BJ (cell line): ENCODE measurements at regions of chr2 and their contacts with region 1.

Region 1: GRCh38 chr2:205947621-205948495 is 138.1 kb downstream of the INO80D start:
- DNase-seq: peak; percentile 16
- H3K4me3 ChIP-seq: no peak overlapping the region
- H3K27me3 ChIP-seq: 0 out of 2 replicates have a peak, but pooled peaks cover 1% of the 10 kb centered on the region
- CTCF ChIP-seq: peak; percentile 97

Region 2: DNA sequence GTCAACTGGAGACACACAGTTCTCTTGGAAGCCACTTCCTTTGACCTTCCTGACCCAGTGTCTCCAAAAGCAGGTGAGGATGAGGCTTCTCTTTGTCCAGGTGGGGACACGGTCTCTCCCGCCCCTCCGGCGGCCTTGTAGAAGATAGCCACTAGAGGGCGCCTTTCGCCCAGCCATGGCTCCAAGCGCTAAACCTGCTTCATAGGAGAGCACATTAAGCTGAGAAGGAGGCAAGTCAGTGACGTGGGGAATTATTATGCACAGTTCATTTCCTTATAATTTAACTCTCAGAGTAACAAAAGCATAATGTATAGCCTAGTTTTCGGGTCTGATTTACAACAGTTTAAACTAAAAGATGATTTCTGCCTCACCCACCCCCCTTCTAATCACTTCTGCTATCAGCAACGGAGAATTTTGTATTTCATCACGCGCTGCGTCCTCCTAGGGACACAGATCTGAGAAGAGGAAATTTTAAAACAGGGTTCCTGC is 1802.6 kb before region 1 on chr2:
- CTCF ChIA-PET with region 1: interaction called, 12 read pairs
- POLR2A ChIA-PET with region 1: no interaction called
- DNase-seq: no peak
- H3K4me3 ChIP-seq: peak overlapping the region; percentile 28
- H3K27me3 ChIP-seq: no peaks in the 10 kb centered on the region
- CTCF ChIP-seq: peak; percentile 95

Region 3: DNA sequence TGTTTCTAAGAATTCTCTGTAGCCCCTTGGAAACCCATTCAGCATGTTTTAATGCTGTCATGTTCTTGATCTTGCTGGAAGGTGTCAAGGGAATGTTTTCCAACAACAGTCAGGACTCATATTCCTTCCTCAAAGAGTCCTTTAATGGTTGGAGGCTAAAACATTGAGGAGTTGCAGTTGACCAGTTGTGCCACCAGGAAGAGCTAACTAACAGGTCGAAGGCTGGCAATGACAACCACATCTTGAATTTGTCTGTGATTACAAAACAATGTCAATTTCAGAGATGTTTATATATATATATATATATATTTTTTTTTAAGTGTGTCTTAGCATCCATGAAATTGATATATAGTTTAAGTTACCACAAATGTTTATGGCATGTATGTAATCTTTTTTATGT is 13.4 kb before region 1 on chr2:
- CTCF ChIA-PET with region 1: interaction called, 21 read pairs
- POLR2A ChIA-PET with region 1: no interaction called
- DNase-seq: no peak
- H3K4me3 ChIP-seq: no peak overlapping the region
- H3K27me3 ChIP-seq: no peaks in the 10 kb centered on the region
- CTCF ChIP-seq: peak; percentile 7; the same call in 1 of the 2 replicates

Region 4: GRCh38 chr2:205964111-205964761 is 16.4 kb after region 1 on chr2:
- CTCF ChIA-PET with region 1: interaction called, 10 read pairs
- POLR2A ChIA-PET with region 1: no interaction called
- DNase-seq: no peak
- H3K4me3 ChIP-seq: no peak overlapping the region
- H3K27me3 ChIP-seq: 0 out of 2 replicates have a peak, but pooled peaks cover 1% of the 10 kb centered on the region
- CTCF ChIP-seq: no peak